IMR-90 (cell line): ENCODE measurements at regions of chrX and their contacts with region 1.

Region 1: DNA sequence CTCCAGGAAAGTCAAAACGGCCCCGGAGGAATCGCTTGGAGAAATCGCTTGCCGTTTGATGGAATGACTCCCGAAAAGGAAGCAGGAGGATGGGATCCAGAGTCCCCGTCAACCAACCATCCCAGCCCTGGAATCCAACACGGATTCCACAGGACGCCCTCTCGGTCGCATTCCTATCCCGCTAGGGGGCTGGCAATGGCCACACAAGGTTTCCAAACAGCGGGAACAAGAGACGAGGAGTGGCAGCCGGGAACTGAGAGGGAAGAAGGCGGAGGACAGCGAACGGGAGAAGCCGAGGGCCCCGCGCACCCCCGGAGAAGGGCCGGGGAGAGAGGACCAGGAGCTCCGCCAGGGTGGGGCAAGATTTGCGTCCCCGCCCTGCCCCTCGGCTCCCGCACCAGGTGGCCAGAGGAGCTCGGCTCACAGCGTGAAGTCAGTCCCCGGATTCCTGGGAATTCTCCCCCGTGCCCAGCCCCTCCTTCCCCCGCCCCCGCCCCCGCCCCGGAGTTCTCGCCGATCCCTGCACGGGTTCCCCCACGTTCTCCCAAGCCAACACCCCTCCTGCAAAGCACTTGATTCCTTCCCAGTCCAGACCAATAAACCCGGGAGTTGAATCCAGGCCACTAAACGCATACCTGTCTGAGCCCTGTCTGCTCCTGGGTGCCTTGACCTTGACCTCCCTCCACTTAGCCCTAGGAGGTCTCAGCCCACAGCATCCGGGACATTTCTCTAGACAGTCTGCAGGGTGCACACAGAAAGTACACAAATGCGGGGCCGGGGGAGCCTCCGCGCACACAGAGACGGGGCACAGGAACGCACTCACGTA is 1.4 kb downstream of the PDZD4 start:
- DNase-seq: no peak
- ATAC-seq: peak; percentile 35
- H3K4me3 ChIP-seq: no peak overlapping the region
- H3K27ac ChIP-seq: no peak overlapping the region
- H3K4me1 ChIP-seq: no peaks in the 10 kb centered on the region
- H3K27me3 ChIP-seq: peaks cover 54% of the 10 kb centered on the region
- CTCF ChIP-seq: no peak
- POLR2A ChIP-seq: no peak
- RAD21 ChIP-seq: no peak

Region 2: GRCh38 chrX:153684467-153685155 is 144.3 kb before region 1 on chrX:
- CTCF ChIA-PET with region 1: no interaction called
- POLR2A ChIA-PET with region 1: no interaction called
- dilution Hi-C with region 1: no loop called
- in situ Hi-C with region 1: no loop called
- intact Hi-C with region 1: no loop called
- DNase-seq: no peak
- ATAC-seq: no peak
- H3K4me3 ChIP-seq: no peak overlapping the region
- H3K27ac ChIP-seq: no peak overlapping the region
- H3K4me1 ChIP-seq: peaks cover under 1% of the 10 kb centered on the region
- H3K27me3 ChIP-seq: peaks cover 3% of the 10 kb centered on the region; the same call in 1 of the 2 replicates
- CTCF ChIP-seq: no peak
- POLR2A ChIP-seq: no peak
- RAD21 ChIP-seq: no peak

Region 3: GRCh38 chrX:153900831-153901752 is 72.2 kb after region 1 on chrX:
- CTCF ChIA-PET with region 1: no interaction called
- POLR2A ChIA-PET with region 1: no interaction called
- dilution Hi-C with region 1: no loop called
- in situ Hi-C with region 1: no loop called
- intact Hi-C with region 1: loop called (anchors 2 kb)
- DNase-seq: peak; percentile 87
- ATAC-seq: peak; percentile 96
- H3K4me3 ChIP-seq: no peak overlapping the region
- H3K27ac ChIP-seq: peak overlapping the region; percentile 7; the same call in 1 of the 2 replicates
- H3K4me1 ChIP-seq: peaks cover 9% of the 10 kb centered on the region; the same call in 1 of the 2 replicates
- H3K27me3 ChIP-seq: peaks cover 8% of the 10 kb centered on the region
- CTCF ChIP-seq: no peak
- POLR2A ChIP-seq: no peak
- RAD21 ChIP-seq: no peak